PC-3 (cell line): ENCODE measurements at regions of chr22 and their contacts with region 1.

Region 1: GRCh38 chr22:23202812-23203451 is 22.6 kb downstream of the BCR start:
- DNase-seq: no peak
- ATAC-seq: no peak
- H3K4me3 ChIP-seq: no peak overlapping the region
- H3K27ac ChIP-seq: no peak overlapping the region
- H3K4me1 ChIP-seq: no peaks in the 10 kb centered on the region
- H3K27me3 ChIP-seq: no peaks in the 10 kb centered on the region
- CTCF ChIP-seq: no peak

Region 2: DNA sequence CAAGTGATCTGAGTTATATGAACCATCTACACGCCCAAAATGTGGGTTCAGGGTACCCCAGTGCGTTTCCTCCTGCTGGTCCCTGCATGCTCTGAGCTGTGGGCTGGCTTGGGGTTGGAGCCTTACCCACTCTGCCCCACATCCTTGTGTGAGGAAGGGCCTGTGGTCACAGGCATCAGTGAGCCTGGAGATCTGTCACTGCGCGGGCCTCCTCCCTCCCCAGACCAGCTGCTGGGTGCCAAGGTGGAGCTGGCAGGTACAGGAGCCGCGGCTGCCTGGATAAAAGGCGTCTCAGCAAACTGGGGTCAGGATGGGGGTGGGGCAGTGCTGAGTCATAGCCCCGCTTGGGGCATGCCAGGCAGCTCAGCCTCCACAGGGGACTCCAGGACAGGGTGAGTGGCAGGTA is 114.7 kb before region 1 on chr22:
- CTCF ChIA-PET with region 1: no interaction called
- POLR2A ChIA-PET with region 1: no interaction called
- intact Hi-C with region 1: no loop called
- DNase-seq: no peak
- ATAC-seq: no peak
- H3K4me3 ChIP-seq: no peak overlapping the region
- H3K27ac ChIP-seq: no peak overlapping the region
- H3K4me1 ChIP-seq: no peaks in the 10 kb centered on the region
- H3K27me3 ChIP-seq: no peaks in the 10 kb centered on the region
- CTCF ChIP-seq: no peak

Region 3: GRCh38 chr22:23248583-23248982 is 45.7 kb after region 1 on chr22:
- CTCF ChIA-PET with region 1: no interaction called
- POLR2A ChIA-PET with region 1: interaction called, 15 read pairs
- intact Hi-C with region 1: no loop called
- DNase-seq: peak; percentile 68
- ATAC-seq: peak; percentile 99
- H3K4me3 ChIP-seq: no peak overlapping the region
- H3K27ac ChIP-seq: peak overlapping the region; percentile 30; the same call in 1 of the 2 replicates
- H3K4me1 ChIP-seq: peaks cover 18% of the 10 kb centered on the region
- H3K27me3 ChIP-seq: no peaks in the 10 kb centered on the region
- CTCF ChIP-seq: no peak